ACHN (cell line): ENCODE measurements at regions of chr13 and their contacts with region 1.

Region 1: GRCh38 chr13:31424117-31424729 is 224.4 kb downstream of the B3GLCT start:
- DNase-seq: peak; percentile 72

Region 2: GRCh38 chr13:31236211-31236786 is 187.9 kb before region 1 on chr13:
- in situ Hi-C with region 1: loop called (anchors 25 kb)
- DNase-seq: peak; percentile 48

Region 3: GRCh38 chr13:31518645-31519044 is 94.4 kb after region 1 on chr13:
- in situ Hi-C with region 1: no loop called
- DNase-seq: no peak

Region 4: DNA sequence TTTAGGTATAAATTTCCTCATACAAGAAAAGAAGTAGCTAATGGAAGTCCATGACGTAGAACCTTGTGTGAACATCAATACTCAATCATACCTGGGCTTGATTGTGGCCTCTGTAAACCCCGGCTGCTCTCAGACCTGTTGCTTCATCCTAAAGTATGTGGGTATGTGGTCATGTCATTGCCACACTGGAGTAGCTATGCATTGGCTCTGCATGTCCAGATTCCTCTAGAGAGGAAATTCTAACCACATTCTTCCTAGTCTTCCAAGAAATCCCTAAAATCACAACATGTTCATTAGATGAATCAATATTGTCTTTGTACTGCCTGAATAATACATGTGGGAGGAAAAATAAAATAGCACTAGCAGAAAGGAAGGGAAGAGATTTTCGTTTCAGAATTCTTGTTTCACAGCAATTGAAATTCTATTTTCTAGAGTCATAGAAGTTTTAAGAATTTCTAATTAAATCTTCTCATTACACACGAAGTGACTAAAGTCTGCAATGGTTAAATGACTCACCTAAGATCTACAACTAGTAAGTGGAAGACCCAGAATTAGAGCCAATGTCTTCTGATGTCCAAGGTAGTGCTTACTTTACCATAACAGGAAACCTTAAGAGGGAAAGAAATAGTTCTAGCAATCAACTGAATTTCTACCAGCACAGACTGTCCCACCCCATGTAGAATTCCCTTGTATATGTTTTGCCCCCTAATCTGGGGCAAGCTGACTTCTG is 343.1 kb after region 1 on chr13:
- in situ Hi-C with region 1: no loop called
- DNase-seq: no peak